ENCODE measurements at regions of chr10 and their contacts with region 1.

Region 1: GRCh38 chr10:15209827-15210509 is 41.5 kb upstream of the NMT2 start:
- DNase-seq: peak; percentile 90

Region 2: GRCh38 chr10:15146366-15146765 is 63.6 kb before region 1 on chr10:
- intact Hi-C with region 1: no loop called
- DNase-seq: no peak

Region 3: DNA sequence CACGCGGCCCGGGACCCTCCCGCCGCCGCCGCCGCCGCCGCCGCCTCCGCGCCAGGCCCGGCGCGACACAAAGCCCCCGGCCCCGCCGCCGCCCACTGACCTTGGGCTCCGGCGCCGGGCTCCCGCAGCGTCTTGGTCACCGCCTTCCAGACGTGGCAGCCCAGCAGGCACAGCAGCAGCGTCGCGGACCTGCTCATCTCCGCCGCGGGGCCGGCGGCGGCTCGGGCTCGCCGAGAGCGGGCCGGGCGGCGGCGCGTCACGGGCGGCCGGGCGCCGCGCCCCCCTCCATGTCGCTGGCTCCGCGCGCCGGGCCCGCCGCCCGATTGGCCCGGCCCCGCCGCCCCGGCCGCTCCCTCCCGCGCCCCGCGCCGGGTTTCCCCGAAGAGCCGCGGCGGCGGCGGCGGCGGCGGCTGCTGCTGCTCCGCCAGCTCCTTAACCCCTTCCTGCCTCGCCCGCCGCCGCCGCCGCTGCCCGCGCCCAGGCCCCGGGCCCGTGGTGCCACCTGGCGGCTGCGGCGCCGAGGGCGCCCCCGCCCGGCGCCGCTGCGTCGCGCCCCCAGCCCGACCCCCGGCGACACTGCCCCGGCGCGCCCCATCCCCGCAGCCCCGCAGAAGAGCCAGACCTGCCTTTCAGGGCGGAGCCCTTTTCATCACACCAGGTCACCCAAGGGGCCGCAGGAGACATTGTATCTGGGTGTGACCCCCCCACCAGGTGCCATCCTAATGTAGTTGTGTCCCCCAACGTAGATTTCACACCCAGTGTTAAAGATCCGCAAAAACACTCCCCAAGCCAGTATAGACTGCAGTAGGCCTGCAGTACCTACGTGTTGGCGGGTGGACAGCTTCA is 161.1 kb after region 1 on chr10 and contains the start of gene FAM171A1:
- intact Hi-C with region 1: loop called (anchors 5 to 10 kb)
- DNase-seq: no peak
- total RNA-seq, gene FAM171A1: 12.1 to 16.3 TPM

Region 4: GRCh38 chr10:15558136-15558535 is 348.2 kb after region 1 on chr10:
- intact Hi-C with region 1: no loop called
- DNase-seq: no peak

Measured in posterior vena cava (tissue), 2 donors.